Heart left ventricle (tissue), 16 donors: ENCODE measurements at regions of chr1 and their contacts with region 1.

Region 1: DNA sequence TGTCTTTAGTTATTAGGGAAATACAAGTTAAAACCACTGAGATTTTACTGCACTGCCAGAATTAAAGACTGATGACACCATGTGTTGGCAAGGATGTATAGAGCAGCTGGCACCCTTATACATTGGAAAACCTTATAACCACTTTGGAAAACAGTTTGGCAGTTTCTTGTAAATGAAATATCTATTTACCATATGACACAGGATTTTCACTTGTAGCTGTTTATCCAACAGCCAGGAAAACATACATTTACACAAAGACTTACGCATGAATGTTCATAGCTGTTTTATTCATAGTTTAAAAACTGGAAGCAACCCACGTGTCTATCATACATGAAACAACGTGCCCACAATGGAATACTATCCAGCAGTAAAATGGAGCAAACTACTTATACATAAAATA is 45.3 kb downstream of the PRRC2C start:
- DNase-seq: no peak
- ATAC-seq: no peak
- H3K4me3 ChIP-seq: no peak overlapping the region
- H3K27ac ChIP-seq: no peak overlapping the region
- H3K4me1 ChIP-seq: no peaks in the 10 kb centered on the region
- H3K27me3 ChIP-seq: no peaks in the 10 kb centered on the region
- CTCF ChIP-seq: no peak
- POLR2A ChIP-seq: no peak

Region 2: GRCh38 chr1:171485375-171486047 is 45.2 kb before region 1 on chr1 and contains the start of gene PRRC2C:
- intact Hi-C with region 1: loop called in 1 of 10 experiments (anchors 5 kb)
- DNase-seq: peak; percentile 97 to 98 (median 97)
- ATAC-seq: peak; percentile 99
- H3K4me3 ChIP-seq: peak within 1 kb of the TSS; percentile 65 to 98 (median 86)
- H3K27ac ChIP-seq: peak within 1 kb of the TSS; percentile 83 to 99 (median 98)
- H3K4me1 ChIP-seq: peaks cover 8 to 48% (median 42%) of the 10 kb centered on the region in 12 donors
- H3K27me3 ChIP-seq: no peaks in the 10 kb centered on the region
- CTCF ChIP-seq: peak in 11 of 12 donors; percentile 65 to 98 (median 75)
- POLR2A ChIP-seq: peak in 1 of 2 donors; percentile 73
- total RNA-seq, gene PRRC2C: 41.6 to 107 (median 62.5) TPM

Region 3: DNA sequence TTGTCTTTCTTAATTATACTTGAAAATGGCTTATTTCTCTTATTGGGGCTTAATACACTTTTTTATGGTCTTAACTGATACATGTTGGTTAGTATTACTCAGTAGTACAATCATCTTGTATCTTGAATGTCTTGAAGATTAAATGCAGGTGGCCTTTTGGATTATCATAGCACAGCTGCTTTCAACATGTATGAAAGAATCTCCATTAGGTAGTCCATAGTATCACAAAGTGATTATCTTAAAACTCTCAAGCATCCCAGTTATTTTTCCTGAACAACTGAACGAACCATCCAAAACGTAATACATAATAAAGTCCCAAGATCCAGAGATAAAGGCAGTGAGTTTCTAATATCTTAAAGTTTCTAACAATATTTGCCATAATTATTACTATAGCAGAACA is 39.6 kb after region 1 on chr1:
- intact Hi-C with region 1: no loop called
- DNase-seq: no peak
- ATAC-seq: no peak
- H3K4me3 ChIP-seq: no peak overlapping the region
- H3K27ac ChIP-seq: no peak overlapping the region
- H3K4me1 ChIP-seq: no peaks in the 10 kb centered on the region
- H3K27me3 ChIP-seq: no peaks in the 10 kb centered on the region
- CTCF ChIP-seq: no peak
- POLR2A ChIP-seq: no peak

Region 4: DNA sequence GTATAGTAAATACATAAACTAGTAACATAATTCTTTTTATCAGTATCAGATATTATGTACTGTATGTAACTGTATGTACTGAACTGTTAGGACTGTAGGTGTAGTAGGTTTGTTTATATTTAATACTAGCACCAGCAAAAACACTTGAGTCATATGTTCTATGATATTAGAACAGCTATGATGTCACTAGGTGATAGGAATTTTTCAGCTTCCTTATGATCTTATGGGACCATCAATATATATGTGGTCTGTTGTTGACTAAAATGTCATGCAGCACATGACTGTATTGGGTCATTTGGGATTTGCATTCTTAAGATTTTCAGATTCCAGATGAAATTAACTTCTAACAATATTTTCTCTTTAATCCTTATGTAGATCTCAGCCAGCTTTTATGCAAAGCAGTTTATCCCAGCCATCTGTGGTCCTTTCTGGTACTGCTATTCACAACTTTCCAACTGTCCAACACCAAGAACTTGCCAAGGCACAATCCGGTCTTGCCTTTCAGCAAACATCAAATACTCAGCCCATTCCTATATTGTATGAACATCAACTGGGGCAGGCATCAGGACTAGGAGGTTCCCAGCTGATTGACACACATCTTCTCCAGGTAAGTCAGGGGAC is 53.0 kb after region 1 on chr1:
- intact Hi-C with region 1: loop called in 4 of 10 experiments (anchors 5 to 10 kb)
- DNase-seq: no peak
- ATAC-seq: no peak
- H3K4me3 ChIP-seq: no peak overlapping the region
- H3K27ac ChIP-seq: no peak overlapping the region
- H3K4me1 ChIP-seq: no peaks in the 10 kb centered on the region
- H3K27me3 ChIP-seq: no peaks in the 10 kb centered on the region
- CTCF ChIP-seq: no peak
- POLR2A ChIP-seq: no peak